Activated CD4-positive, alpha-beta memory T cell treated with anti-CD3 and anti-CD28 coated beads for 36 hours (primary cell): ENCODE measurements at regions of chr16 and their contacts with region 1.

Region 1: GRCh38 chr16:2980227-2981086 is at the start of gene PKMYT1:
- DNase-seq: peak; percentile 96
- H3K4me3 Mint-ChIP-seq: peak within 1 kb of the TSS; percentile 87
- H3K27ac Mint-ChIP-seq: peak within 1 kb of the TSS; percentile 81
- H3K4me1 Mint-ChIP-seq: peaks cover 15% of the 10 kb centered on the region
- H3K27me3 Mint-ChIP-seq: no peaks in the 10 kb centered on the region
- total RNA-seq, gene PKMYT1: 123 to 134 TPM

Region 2: DNA sequence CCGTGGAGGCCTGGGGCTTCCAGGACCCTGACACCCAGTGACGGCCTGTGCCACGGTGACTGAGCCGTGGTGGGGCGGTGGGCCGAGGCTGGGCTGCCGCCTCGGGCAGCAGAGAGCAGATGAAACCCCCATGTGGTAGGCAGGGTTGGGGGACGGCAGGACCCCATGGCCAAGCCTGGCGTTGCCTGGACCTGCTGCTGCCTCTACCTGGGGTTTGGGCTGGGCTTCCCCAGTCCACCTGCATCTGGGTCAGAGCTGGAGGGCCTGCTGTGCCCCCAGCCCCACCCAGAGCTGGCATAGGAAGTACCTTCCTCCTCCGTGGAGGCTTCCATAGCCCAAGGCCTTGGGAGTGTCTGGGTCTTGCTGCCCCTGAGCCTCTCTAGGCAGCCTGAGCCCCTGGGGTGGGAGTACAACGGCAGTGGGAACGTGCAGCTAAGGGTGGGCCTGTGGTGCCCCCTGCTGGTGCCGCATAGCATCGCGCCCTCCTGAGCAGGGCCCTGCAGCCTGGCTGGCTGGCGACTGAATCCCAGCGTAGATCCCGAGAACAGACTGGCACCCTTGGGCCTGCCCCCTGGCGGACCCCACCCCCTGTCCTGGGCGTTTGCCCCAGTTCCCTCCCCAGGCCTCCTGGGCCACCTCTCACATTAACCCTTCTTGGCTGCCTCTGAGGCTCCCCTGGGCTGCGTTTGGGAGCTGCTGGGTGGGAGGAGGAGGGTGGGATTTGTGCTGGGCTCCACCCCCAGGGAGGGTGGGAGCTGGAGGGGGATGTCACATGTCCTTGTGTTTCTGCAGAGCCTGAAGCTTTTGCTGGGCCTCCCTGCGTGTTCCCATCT is 479.3 kb before region 1 on chr16:
- CTCF ChIA-PET with region 1: no interaction called
- POLR2A ChIA-PET with region 1: no interaction called
- intact Hi-C with region 1: no loop called
- DNase-seq: peak; percentile 85
- H3K4me3 Mint-ChIP-seq: no peak overlapping the region
- H3K27ac Mint-ChIP-seq: no peak overlapping the region
- H3K4me1 Mint-ChIP-seq: no peaks in the 10 kb centered on the region
- H3K27me3 Mint-ChIP-seq: no peaks in the 10 kb centered on the region

Region 3: GRCh38 chr16:2804775-2805174 is 175.7 kb before region 1 on chr16:
- CTCF ChIA-PET with region 1: no interaction called
- POLR2A ChIA-PET with region 1: no interaction called
- intact Hi-C with region 1: no loop called
- DNase-seq: no peak
- H3K4me3 Mint-ChIP-seq: no peak overlapping the region
- H3K27ac Mint-ChIP-seq: no peak overlapping the region
- H3K4me1 Mint-ChIP-seq: no peaks in the 10 kb centered on the region
- H3K27me3 Mint-ChIP-seq: peaks cover 19% of the 10 kb centered on the region

Region 4: DNA sequence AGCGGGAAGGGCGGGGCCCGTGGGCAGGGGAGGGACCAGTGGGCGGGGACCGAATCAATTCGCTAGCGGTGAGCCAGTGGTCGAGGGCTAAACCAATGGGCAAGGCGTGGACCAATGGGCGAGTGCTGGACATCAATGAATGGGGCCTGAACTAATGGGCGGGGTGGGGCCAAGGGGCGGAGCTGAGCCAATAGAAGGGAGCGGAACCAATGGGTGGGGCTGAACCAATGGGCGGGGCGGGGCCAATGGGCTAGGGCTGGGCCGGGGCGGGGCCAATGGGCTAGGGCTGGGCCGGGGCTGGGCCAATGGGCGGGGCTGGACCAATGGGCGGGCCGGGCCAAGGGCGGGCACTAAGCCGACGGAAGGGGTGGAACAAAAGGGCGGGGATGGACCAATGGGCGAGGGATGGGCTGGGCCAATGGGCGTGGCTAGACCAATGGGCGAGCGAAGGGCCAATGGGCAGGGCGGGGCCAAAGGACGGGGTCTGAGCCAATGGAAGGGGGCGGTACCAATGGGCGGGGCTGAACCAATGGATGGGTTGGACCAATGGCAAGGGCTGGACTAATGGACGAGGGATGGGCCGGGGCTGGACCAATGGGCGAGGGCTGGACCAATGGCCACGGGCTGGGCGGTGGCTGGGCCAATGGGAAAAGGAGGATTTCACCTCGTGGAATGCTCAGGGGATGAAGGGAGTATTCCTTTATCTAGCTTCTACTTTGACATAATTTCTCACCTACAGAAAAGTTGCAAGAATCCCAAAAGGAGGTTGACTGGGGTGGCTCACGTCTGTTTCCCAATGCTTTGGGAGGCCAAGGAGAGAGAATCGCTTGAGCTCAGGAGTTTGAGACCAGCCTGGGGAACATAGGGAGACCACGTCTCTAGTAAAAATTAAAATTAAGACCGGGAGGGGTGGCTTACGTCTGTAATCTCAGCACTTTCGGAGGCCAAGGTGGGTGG is 74.7 kb before region 1 on chr16:
- CTCF ChIA-PET with region 1: interaction called, 3 read pairs
- POLR2A ChIA-PET with region 1: no interaction called
- intact Hi-C with region 1: loop called (anchors 5 kb)
- DNase-seq: peak; percentile 99
- H3K4me3 Mint-ChIP-seq: peak overlapping the region; percentile 97
- H3K27ac Mint-ChIP-seq: peak overlapping the region; percentile 51
- H3K4me1 Mint-ChIP-seq: peaks cover 16% of the 10 kb centered on the region
- H3K27me3 Mint-ChIP-seq: no peaks in the 10 kb centered on the region

Region 5: GRCh38 chr16:2968738-2969544 is 11.5 kb before region 1 on chr16 and contains the start of gene PAQR4:
- CTCF ChIA-PET with region 1: interaction called, 11 read pairs
- POLR2A ChIA-PET with region 1: interaction called, 14 read pairs
- intact Hi-C with region 1: loop called (anchors 1 kb)
- DNase-seq: peak; percentile 87
- H3K4me3 Mint-ChIP-seq: peak within 1 kb of the TSS; percentile 76
- H3K27ac Mint-ChIP-seq: peak within 1 kb of the TSS; percentile 38
- H3K4me1 Mint-ChIP-seq: peaks cover 33% of the 10 kb centered on the region
- H3K27me3 Mint-ChIP-seq: peaks cover 21% of the 10 kb centered on the region
- total RNA-seq, gene PAQR4: 37.0 to 37.9 TPM